CD14-positive monocyte (primary cell): ENCODE measurements at regions of chr7 and their contacts with region 1.

Region 1: GRCh38 chr7:85730012-85730411 is 543.2 kb upstream of the SEMA3D start:
- DNase-seq: no peak
- H3K4me3 ChIP-seq: no peak overlapping the region
- H3K4me3 Mint-ChIP-seq: no peak overlapping the region
- H3K27ac ChIP-seq: no peak overlapping the region
- H3K27ac Mint-ChIP-seq: no peak overlapping the region
- H3K4me1 ChIP-seq: no peaks in the 10 kb centered on the region
- H3K4me1 Mint-ChIP-seq: no peaks in the 10 kb centered on the region
- H3K27me3 ChIP-seq: no peaks in the 10 kb centered on the region
- H3K27me3 Mint-ChIP-seq: peaks cover 0 to 6% (median 2%) of the 10 kb centered on the region in 3 donors
- CTCF ChIP-seq: no peak

Region 2: DNA sequence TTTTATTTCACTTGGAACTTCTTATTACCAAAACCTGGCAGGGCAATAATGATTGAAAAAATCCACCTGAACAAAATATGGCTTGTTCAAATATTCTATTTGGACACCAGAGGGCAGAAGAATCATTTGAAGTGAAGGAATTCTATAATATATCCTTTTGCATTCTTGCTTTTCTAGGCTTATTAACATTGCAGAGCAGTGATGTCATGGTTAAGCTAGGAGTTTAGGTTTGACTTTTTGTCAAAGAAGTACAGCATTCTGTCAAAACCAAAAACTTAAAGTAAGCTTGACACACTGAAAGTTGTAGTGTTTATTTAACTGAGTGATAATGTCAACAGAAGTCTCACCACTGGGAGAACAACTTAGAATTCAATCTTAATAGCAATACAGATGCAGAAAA is 699.1 kb before region 1 on chr7:
- intact Hi-C with region 1: loop called in 1 of 2 experiments (anchors 10 kb)
- DNase-seq: no peak
- H3K4me3 ChIP-seq: no peak overlapping the region
- H3K4me3 Mint-ChIP-seq: no peak overlapping the region
- H3K27ac ChIP-seq: no peak overlapping the region
- H3K27ac Mint-ChIP-seq: no peak overlapping the region
- H3K4me1 ChIP-seq: no peaks in the 10 kb centered on the region
- H3K4me1 Mint-ChIP-seq: no peaks in the 10 kb centered on the region
- H3K27me3 ChIP-seq: no peaks in the 10 kb centered on the region
- H3K27me3 Mint-ChIP-seq: no peaks in the 10 kb centered on the region
- CTCF ChIP-seq: peak; percentile 26

Region 3: GRCh38 chr7:85773116-85773728 is 43.2 kb after region 1 on chr7:
- intact Hi-C with region 1: no loop called
- DNase-seq: no peak
- H3K4me3 ChIP-seq: no peak overlapping the region
- H3K4me3 Mint-ChIP-seq: no peak overlapping the region
- H3K27ac ChIP-seq: no peak overlapping the region
- H3K27ac Mint-ChIP-seq: no peak overlapping the region
- H3K4me1 ChIP-seq: no peaks in the 10 kb centered on the region
- H3K4me1 Mint-ChIP-seq: no peaks in the 10 kb centered on the region
- H3K27me3 ChIP-seq: no peaks in the 10 kb centered on the region
- H3K27me3 Mint-ChIP-seq: peaks cover 0 to 2% (median 0%) of the 10 kb centered on the region in 3 donors
- CTCF ChIP-seq: no peak